HepG2 (cell line): ENCODE measurements at regions of chr14 and their contacts with region 1.

Region 1: DNA sequence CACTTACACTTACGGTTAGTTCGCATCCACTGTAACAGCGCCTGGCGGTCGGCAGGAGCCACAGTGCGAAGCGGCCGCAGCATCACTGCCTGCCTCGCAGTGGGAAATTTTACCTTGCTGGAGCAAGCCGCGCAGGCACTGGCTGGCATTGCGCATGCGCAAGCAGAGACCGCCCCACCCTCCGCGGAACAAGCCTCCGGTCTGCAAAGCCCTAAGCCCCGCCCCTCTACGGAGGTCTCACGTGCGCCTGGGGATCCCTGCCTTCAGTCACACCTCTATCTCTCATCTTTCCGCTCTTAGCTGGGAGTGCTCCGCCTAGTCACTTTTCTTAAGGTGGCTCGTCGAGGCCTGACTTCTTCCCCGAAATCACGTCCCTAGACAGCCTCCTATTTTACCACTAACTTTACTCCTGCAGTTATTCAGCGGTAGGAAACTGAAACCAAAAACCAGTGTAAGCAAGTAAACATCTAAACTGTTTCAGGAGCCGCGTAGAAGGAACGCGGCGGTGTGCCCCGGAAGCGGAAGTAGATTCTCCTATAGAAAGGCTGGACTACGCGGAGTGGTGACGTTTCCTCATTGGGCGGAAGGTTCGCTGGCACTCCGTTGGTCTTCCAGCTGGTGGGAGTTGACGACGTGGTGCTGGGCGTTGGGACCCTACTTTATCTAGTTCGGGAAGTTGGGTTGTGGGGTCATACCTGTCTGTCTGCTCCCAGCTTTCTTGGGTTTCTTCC is at the start of gene SRP54:
- DNase-seq: peak; percentile 100
- ATAC-seq: peak; percentile 89
- H3K4me3 ChIP-seq: peak within 1 kb of the TSS; percentile 78 to 84 (median 80)
- H3K27ac ChIP-seq: peak within 1 kb of the TSS; percentile 93
- H3K4me1 ChIP-seq: peaks cover 59% of the 10 kb centered on the region
- H3K27me3 ChIP-seq: peaks cover 0 to 3% of the 10 kb centered on the region in 2 experiments; a peak in 1 of 5 replicates
- CTCF ChIP-seq: peak; percentile 67
- EP300 ChIP-seq: no peak; a peak in 2 of 4 replicates
- POLR2A ChIP-seq: peak; percentile 99
- RAD21 ChIP-seq: peak; percentile 59
- total RNA-seq, gene SRP54: 207 and 297 TPM in 2 replicates

Region 2: GRCh38 chr14:34629657-34630529 is 352.7 kb before region 1 on chr14 and contains the start of gene SNX6:
- CTCF ChIA-PET with region 1: no interaction called
- POLR2A ChIA-PET with region 1: interaction called, 4 read pairs
- in situ Hi-C with region 1: no loop called
- intact Hi-C with region 1: loop called (anchors 5 kb)
- DNase-seq: peak; percentile 78
- ATAC-seq: peak; percentile 97
- H3K4me3 ChIP-seq: peak within 1 kb of the TSS; percentile 95 to 100 (median 99)
- H3K27ac ChIP-seq: peak within 1 kb of the TSS; percentile 81
- H3K4me1 ChIP-seq: peaks cover 39% of the 10 kb centered on the region
- H3K27me3 ChIP-seq: peaks cover 0 to 3% of the 10 kb centered on the region in 2 experiments; a peak in 1 of 5 replicates
- CTCF ChIP-seq: peak; percentile 38; the same call in 1 of the 2 replicates
- EP300 ChIP-seq: no peak; a peak in 1 of 4 replicates
- POLR2A ChIP-seq: peak; percentile 85 to 97
- RAD21 ChIP-seq: peak; percentile 24
- total RNA-seq, gene SNX6: 169 and 318 TPM in 2 replicates

Region 3: DNA sequence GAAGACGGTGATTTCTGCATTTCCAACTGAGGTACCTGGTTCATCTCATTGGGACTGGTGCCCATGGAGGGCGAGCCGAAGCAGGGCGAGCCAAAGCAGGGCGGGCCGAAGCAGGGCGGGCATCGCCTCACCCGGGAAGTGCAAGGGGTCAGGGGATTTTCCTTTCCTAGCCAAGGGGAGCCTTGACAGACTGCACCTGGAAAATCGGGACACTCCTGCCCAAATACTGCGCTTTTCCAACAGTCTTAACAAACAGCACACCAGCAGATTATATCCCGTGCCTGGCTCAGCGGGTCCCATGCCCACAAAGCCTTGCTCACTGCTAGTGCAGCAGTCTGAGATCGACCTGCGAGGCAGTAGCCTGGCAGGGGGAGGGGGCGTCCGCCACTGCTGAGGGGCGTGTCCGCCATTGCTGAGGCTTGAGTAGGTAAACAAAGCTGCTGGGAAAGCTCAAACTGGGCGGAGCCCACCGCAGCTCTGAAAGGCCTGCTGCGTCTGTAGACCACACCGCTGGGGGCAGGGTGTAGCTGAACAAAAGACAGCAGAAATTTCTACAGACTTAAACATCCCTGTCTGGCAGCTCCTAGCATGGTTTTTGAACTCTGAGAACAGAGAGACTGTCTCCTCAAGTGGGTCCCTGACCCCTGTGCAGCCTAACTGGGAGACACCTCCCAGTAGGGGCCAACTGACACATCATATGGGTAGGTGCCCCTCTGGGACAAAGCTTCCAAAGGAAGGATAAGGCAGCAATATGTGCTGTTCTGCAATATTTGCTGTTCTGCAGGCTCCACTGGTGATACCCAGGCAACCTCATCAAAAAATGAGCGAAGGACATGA is 184.6 kb before region 1 on chr14:
- CTCF ChIA-PET with region 1: no interaction called
- POLR2A ChIA-PET with region 1: interaction called, 16 read pairs
- in situ Hi-C with region 1: no loop called
- intact Hi-C with region 1: loop called (anchors 1 kb)
- DNase-seq: peak; percentile 98
- ATAC-seq: peak; percentile 100
- H3K4me3 ChIP-seq: peak overlapping the region in 1 of 3 experiments; percentile 15; a peak in 1 of 6 replicates
- H3K27ac ChIP-seq: peak overlapping the region; percentile 18
- H3K4me1 ChIP-seq: peaks cover 12% of the 10 kb centered on the region
- H3K27me3 ChIP-seq: no peaks in the 10 kb centered on the region
- CTCF ChIP-seq: peak; percentile 66
- EP300 ChIP-seq: no peak
- POLR2A ChIP-seq: no peak
- RAD21 ChIP-seq: peak; percentile 69; the same call in 1 of the 2 replicates

Region 4: GRCh38 chr14:34966413-34966812 is 16.2 kb before region 1 on chr14:
- CTCF ChIA-PET with region 1: no interaction called
- POLR2A ChIA-PET with region 1: interaction called, 30 read pairs
- in situ Hi-C with region 1: no loop called
- intact Hi-C with region 1: no loop called
- DNase-seq: no peak
- ATAC-seq: peak; percentile 44; the same call in 2 of the 3 replicates
- H3K4me3 ChIP-seq: no peak overlapping the region
- H3K27ac ChIP-seq: no peak overlapping the region
- H3K4me1 ChIP-seq: no peaks in the 10 kb centered on the region
- H3K27me3 ChIP-seq: no peaks in the 10 kb centered on the region
- CTCF ChIP-seq: no peak
- EP300 ChIP-seq: no peak
- POLR2A ChIP-seq: no peak
- RAD21 ChIP-seq: no peak

Region 5: DNA sequence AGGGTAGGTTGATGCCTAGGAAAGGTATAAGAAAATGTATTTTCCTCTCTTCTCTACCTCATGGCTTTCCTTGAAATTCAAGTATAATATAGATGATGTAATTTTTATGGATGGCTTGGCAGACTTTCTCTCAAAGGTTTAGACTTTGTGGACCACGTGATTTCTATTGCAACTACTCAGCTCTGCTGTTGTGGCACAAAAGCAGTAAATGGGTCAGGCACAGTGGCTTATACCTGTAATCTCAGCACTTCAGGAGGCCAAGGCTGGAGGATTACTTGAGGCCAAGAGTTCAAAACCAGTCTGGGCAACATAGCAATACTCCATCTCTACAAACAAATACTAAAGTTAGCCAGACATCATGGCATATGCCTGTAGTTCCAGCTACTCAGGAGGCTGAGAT is 22.3 kb after region 1 on chr14:
- CTCF ChIA-PET with region 1: no interaction called
- POLR2A ChIA-PET with region 1: interaction called, 45 read pairs
- in situ Hi-C with region 1: no loop called
- intact Hi-C with region 1: no loop called
- DNase-seq: no peak
- ATAC-seq: no peak
- H3K4me3 ChIP-seq: no peak overlapping the region
- H3K27ac ChIP-seq: no peak overlapping the region
- H3K4me1 ChIP-seq: no peaks in the 10 kb centered on the region
- H3K27me3 ChIP-seq: no peaks in the 10 kb centered on the region
- CTCF ChIP-seq: no peak
- EP300 ChIP-seq: no peak
- POLR2A ChIP-seq: no peak
- RAD21 ChIP-seq: no peak

Region 6: GRCh38 chr14:35078082-35078481 is 95.5 kb after region 1 on chr14:
- CTCF ChIA-PET with region 1: no interaction called
- POLR2A ChIA-PET with region 1: interaction called, 14 read pairs
- in situ Hi-C with region 1: no loop called
- intact Hi-C with region 1: no loop called
- DNase-seq: peak; percentile 83
- ATAC-seq: peak; percentile 94
- H3K4me3 ChIP-seq: no peak overlapping the region
- H3K27ac ChIP-seq: no peak overlapping the region
- H3K4me1 ChIP-seq: peaks cover 13% of the 10 kb centered on the region
- H3K27me3 ChIP-seq: no peaks in the 10 kb centered on the region
- CTCF ChIP-seq: no peak
- EP300 ChIP-seq: peak in 1 of 2 experiments; percentile 47; a peak in 1 of 4 replicates
- POLR2A ChIP-seq: no peak
- RAD21 ChIP-seq: 0 out of 2 replicates have a peak, but pooled peaks have one; percentile 18

Region 7: DNA sequence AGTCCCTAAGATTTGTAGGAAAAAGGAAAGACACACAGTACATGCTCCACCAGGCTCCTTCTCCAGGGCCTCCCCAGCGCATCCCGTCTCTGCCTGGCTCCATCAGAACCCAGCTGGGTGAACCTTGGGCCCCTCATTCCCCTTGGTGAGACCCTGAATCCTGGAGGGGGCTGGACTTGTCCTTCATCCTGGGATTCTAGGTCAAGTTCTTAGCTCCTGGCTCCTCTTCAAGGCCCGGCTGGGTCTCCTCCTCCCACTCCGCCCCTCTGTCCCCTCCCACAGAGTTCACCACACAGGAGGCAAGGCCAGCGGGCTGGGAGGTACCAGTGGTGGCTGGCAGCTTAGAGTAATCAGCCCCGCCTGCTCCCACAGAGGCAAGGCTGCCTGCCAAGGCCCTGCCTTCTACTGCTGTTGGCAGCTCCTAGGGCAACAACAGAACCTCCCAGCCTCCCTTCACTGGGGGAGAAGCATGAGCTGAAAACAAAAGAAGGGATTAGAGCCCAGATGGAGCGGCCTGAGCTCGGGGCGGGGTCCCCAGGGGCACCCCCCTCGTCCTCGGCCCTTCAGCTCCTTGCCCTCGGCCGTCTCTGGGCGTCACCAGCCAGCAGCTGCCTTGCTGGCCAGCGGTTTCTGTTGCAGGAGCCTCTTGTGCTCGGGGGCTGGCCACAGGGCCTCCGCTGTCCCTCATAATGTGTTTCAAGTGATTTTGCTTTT is 359.0 kb after region 1 on chr14:
- CTCF ChIA-PET with region 1: no interaction called
- POLR2A ChIA-PET with region 1: interaction called, 5 read pairs
- in situ Hi-C with region 1: no loop called
- intact Hi-C with region 1: loop called (anchors 5 kb)
- DNase-seq: peak; percentile 91
- ATAC-seq: peak; percentile 85
- H3K4me3 ChIP-seq: peak overlapping the region; percentile 63 to 78 (median 64)
- H3K27ac ChIP-seq: no peak overlapping the region
- H3K4me1 ChIP-seq: peaks cover 90% of the 10 kb centered on the region
- H3K27me3 ChIP-seq: peaks cover 0 to 3% of the 10 kb centered on the region in 2 experiments; a peak in 2 of 5 replicates
- CTCF ChIP-seq: no peak; the same call in 1 of the 2 replicates
- EP300 ChIP-seq: no peak; a peak in 1 of 4 replicates
- POLR2A ChIP-seq: peak in 1 of 2 experiments; percentile 62; a peak in 2 of 4 replicates
- RAD21 ChIP-seq: 0 out of 2 replicates have a peak, but pooled peaks have one; percentile 31

Region 8: DNA sequence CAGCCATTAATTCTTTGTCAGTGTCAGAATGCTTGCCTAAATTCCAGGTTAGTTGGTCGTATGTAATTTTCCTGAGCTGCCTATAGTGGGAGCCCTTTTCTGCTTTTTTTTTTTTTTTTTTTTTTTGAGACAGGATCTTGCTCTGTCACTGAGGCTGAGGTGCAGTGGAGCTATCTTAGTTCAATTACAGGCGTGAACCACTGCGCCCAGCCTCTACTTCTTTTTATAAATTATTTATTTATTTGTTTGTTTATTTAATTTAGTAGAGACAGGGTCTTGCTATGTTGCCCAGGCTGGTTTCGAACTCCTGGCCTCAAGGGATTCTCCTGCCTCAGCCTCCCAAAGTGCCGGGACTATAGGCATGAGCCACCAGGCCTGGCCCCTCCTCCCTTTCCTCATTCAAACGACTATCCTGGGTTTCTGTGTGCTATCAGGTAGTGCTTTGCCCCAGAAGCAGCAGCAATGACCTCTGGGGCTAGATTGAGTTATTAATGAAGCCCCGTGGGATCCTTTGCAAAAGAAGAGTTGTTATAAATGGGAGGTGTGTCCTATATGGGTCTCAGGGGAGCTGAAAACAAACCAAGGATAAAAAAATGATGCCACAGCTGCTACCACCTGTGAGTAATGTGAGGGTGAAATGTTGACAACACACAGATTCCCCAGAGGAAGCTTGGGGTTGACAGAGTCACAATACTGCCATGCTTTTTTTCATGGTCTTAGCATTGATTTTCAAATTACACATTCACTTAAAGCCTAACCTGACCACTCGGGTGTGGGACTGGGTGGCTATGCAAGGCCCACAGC is 456.5 kb after region 1 on chr14:
- CTCF ChIA-PET with region 1: no interaction called
- POLR2A ChIA-PET with region 1: no interaction called
- in situ Hi-C with region 1: no loop called
- intact Hi-C with region 1: no loop called
- DNase-seq: peak; percentile 52
- ATAC-seq: peak; percentile 75
- H3K4me3 ChIP-seq: no peak overlapping the region
- H3K27ac ChIP-seq: no peak overlapping the region
- H3K4me1 ChIP-seq: no peaks in the 10 kb centered on the region
- H3K27me3 ChIP-seq: no peaks in the 10 kb centered on the region
- CTCF ChIP-seq: peak; percentile 70
- EP300 ChIP-seq: no peak
- POLR2A ChIP-seq: no peak
- RAD21 ChIP-seq: no peak; the same call in 1 of the 2 replicates